ENCODE measurements at regions of chr7 and their contacts with region 1.

Region 1: GRCh38 chr7:100266576-100267354 is 40.7 kb upstream of the SPDYE3 start:
- DNase-seq: no peak
- H3K4me3 ChIP-seq: no peak overlapping the region
- H3K27ac ChIP-seq: peak overlapping the region in 9 of 59 donors; percentile 2 to 44 (median 11)
- H3K27me3 ChIP-seq: no peaks in the 10 kb centered on the region
- CTCF ChIP-seq: no peak

Region 2: GRCh38 chr7:100221231-100221718 is 45.5 kb before region 1 on chr7:
- intact Hi-C with region 1: loop called in 1 of 2 experiments (anchors 5 kb)
- DNase-seq: no peak
- H3K4me3 ChIP-seq: no peak overlapping the region
- H3K27ac ChIP-seq: peak overlapping the region in 14 of 59 donors; percentile 1 to 45 (median 20)
- H3K27me3 ChIP-seq: no peaks in the 10 kb centered on the region
- CTCF ChIP-seq: no peak

Region 3: GRCh38 chr7:100803398-100804233 is 536.9 kb after region 1 on chr7:
- intact Hi-C with region 1: no loop called
- DNase-seq: peak; percentile 34 to 82 (median 68)
- H3K4me3 ChIP-seq: peak overlapping the region in 28 of 59 donors; percentile 1 to 44 (median 24)
- H3K27ac ChIP-seq: peak overlapping the region in 8 of 59 donors; percentile 11 to 55 (median 38)
- H3K27me3 ChIP-seq: peaks cover 0 to 3% (median 0%) of the 10 kb centered on the region in 45 donors
- CTCF ChIP-seq: no peak

Measured in dorsolateral prefrontal cortex (tissue), 120 donors.